A673 (cell line): ENCODE measurements at regions of chr5 and their contacts with region 1.

Region 1: DNA sequence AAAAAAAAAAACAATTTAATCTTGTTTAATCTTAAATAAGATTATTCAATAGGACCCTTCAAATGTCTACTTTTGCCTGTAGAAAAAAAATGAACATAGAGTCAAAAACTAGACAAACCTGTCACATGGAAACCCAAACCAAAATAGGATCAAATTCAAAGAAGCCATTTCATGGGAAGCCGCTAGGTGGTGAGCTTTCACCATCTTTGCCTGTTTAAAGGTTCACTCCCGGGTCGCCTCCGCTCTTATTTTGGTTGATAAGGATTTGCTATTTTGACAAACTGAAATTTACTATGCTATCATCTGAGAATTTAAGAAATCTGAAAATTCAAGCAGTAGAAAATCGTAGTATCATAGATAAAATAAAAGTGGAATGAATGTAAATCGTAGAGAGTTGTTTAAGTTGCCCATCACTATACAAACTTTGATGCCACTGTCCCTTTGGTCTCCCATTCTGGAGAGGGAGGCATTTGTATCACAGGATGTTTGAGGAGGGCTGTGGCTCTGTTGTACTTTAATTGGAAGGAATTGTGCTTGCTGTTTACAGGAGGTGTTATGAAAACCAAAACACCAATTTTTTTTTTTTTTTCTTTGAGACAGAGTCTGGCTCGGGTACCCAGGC is 43.5 kb upstream of the DNAH5 start:
- DNase-seq: peak; percentile 71
- H3K4me3 ChIP-seq: no peak overlapping the region
- H3K27ac ChIP-seq: no peak overlapping the region
- H3K4me1 ChIP-seq: no peaks in the 10 kb centered on the region
- H3K27me3 ChIP-seq: peaks cover 9% of the 10 kb centered on the region
- CTCF ChIP-seq: peak; percentile 85

Region 2: GRCh38 chr5:13814302-13814701 is 173.7 kb before region 1 on chr5:
- CTCF ChIA-PET with region 1: no interaction called
- POLR2A ChIA-PET with region 1: no interaction called
- intact Hi-C with region 1: no loop called
- DNase-seq: no peak
- H3K4me3 ChIP-seq: no peak overlapping the region
- H3K27ac ChIP-seq: no peak overlapping the region
- H3K4me1 ChIP-seq: no peaks in the 10 kb centered on the region
- H3K27me3 ChIP-seq: peaks cover 23% of the 10 kb centered on the region
- CTCF ChIP-seq: no peak

Region 3: DNA sequence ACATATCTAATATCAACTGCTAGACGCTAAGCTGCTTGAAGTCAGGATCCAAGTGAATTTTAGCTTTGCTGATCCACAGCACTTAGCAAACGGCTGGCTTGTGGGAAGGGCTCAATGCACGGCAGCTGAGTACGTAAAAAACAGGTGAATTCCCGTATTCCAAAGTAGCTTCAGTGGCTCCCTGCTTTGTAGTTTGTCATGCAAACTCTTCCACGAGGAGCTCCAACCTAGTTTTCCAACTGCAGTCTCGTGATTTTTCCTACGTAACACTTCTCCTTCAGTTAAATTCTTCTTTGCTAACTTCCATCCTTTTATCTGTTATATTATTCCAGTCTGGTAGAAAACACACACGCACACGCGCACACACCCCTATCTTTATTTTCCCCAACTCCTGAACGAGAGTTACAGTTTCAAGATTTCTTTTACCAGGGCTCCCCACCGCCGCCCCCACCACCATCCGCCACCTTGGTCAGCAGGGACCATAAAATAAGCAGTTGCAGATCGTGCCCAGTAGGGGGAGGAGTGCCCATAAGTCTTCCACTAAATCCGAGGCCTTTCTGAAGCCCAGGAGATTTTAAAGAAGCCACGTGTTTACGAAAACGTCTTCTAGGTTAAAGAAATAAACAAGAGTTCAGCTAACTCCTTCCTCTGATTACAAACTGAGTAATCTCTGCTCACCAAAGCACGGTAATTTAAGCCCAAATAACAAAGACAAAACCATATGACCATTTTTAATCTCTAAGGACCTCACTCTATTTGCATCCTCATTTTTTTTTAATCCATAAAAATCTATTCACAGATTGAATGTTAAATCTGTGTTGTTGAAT is 120.4 kb after region 1 on chr5:
- CTCF ChIA-PET with region 1: no interaction called
- POLR2A ChIA-PET with region 1: no interaction called
- intact Hi-C with region 1: loop called (anchors 2 kb)
- DNase-seq: peak; percentile 86
- H3K4me3 ChIP-seq: no peak overlapping the region
- H3K27ac ChIP-seq: no peak overlapping the region
- H3K4me1 ChIP-seq: peaks cover 5% of the 10 kb centered on the region
- H3K27me3 ChIP-seq: no peaks in the 10 kb centered on the region
- CTCF ChIP-seq: peak; percentile 88

Region 4: DNA sequence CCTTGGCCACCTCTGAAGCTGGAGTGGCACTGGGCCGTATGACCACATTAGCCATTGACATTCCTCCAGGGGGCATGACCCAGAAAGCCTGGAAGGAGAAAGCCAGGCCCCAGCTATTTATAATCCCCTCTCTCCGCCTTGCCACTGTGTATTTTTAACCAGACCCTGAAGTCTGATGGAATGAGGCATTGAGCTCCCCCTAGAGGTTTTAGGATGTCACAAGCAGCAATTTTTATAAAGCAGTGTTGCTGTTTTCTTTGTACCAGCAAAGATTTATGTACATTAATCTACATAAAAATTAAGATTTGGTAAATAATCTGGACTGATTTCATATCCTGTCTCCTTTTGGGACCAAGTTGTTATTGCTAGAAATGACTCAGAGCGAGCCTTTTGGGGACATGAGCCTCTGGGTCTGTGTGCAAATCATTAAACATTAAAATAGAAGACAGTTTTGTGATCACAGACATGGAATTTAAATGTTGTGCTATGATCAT is 282.3 kb after region 1 on chr5:
- CTCF ChIA-PET with region 1: interaction called, 5 read pairs
- POLR2A ChIA-PET with region 1: no interaction called
- intact Hi-C with region 1: loop called (anchors 5 kb)
- DNase-seq: peak; percentile 82
- H3K4me3 ChIP-seq: no peak overlapping the region
- H3K27ac ChIP-seq: no peak overlapping the region
- H3K4me1 ChIP-seq: peaks cover 74% of the 10 kb centered on the region
- H3K27me3 ChIP-seq: no peaks in the 10 kb centered on the region
- CTCF ChIP-seq: peak; percentile 86

Region 5: GRCh38 chr5:14351845-14352712 is 364.1 kb after region 1 on chr5:
- CTCF ChIA-PET with region 1: no interaction called
- POLR2A ChIA-PET with region 1: no interaction called
- intact Hi-C with region 1: loop called (anchors 2 kb)
- DNase-seq: peak; percentile 70
- H3K4me3 ChIP-seq: no peak overlapping the region
- H3K27ac ChIP-seq: no peak overlapping the region
- H3K4me1 ChIP-seq: no peaks in the 10 kb centered on the region
- H3K27me3 ChIP-seq: no peaks in the 10 kb centered on the region
- CTCF ChIP-seq: peak; percentile 95

Region 6: DNA sequence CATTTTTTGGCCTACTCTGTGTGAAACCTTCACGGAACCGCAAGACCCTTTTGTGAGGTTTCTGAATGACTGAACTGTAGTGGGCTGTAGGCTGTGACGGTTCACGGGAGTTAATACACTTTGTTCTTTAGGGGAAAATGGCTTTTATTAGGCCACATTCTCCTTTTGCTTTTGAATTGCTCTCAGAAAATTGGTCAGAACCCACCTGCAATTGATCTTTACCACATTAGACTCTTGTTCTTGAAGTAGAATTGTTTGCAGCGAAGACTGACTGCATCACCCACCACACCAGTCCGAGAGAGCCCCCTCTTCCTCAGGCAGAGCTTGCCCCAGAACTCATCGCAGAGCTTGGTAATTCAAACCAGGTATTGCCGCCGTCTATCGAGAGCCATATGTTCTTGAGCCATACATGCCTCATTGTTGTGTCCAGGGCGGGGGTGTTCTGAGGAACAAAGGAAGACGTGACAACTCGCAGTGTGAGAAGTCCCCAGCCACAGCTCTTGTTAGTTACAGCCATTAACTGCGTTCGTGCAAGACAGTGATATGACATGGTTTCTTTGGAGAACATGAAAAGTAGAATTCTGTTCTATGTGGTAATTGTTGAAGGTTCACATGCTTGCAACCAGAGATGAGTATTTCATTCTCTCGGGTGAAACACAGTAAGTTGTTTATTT is 427.2 kb after region 1 on chr5:
- CTCF ChIA-PET with region 1: no interaction called
- POLR2A ChIA-PET with region 1: no interaction called
- intact Hi-C with region 1: no loop called
- DNase-seq: no peak
- H3K4me3 ChIP-seq: no peak overlapping the region
- H3K27ac ChIP-seq: no peak overlapping the region
- H3K4me1 ChIP-seq: peaks cover 34% of the 10 kb centered on the region
- H3K27me3 ChIP-seq: no peaks in the 10 kb centered on the region
- CTCF ChIP-seq: no peak